Activated CD8-positive, alpha-beta T cell treated with anti-CD3 and anti-CD28 coated beads, Interleukin-2, amount 10 ng/mL, durations not matched to agents 7 days and 5 days (primary cell): ENCODE measurements at regions of chr7 and their contacts with region 1.

Region 1: DNA sequence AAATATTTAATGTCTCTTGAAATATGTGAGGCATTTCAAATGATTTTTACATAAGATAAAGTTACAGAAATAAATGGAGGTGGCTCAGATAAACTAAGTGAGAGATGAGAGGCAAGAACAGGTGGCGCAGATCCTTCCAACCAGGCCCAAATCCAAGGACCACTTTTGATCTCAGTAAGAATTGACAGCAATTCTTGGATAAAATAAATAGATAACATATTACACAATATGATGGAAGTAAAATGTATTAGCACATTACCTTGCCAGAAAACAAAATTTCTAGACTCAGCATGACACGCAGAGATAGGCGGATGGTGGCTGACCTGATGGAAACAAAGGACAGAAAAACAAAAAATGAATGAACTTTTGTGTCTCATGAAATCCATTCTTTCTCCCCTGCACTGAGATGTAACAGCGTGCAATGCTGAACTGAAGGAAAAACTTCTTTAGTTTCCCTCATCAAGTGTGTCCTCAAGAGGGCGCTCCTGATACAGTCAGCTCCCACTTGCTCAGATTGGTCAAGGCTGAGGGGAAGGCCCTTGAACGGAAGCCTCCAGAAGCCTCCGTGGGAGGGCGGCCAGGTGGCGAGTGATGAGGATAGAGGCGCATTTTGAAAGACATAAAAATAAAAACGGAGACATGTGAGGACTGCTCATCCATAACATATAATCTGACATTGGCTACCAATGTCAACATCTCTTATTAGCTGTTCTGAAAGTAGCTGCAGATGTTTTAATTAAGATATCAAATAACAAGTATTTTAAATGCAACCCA is 62.8 kb upstream of the GSDME start:
- DNase-seq: peak; percentile 90
- ATAC-seq: peak; percentile 50
- H3K4me3 Mint-ChIP-seq: peak overlapping the region; percentile 60
- H3K27ac Mint-ChIP-seq: peak overlapping the region; percentile 93
- H3K4me1 Mint-ChIP-seq: peaks cover 42% of the 10 kb centered on the region
- H3K27me3 Mint-ChIP-seq: no peaks in the 10 kb centered on the region

Region 2: GRCh38 chr7:24778543-24779282 is 41.4 kb before region 1 on chr7:
- CTCF ChIA-PET with region 1: no interaction called
- POLR2A ChIA-PET with region 1: no interaction called
- DNase-seq: no peak
- ATAC-seq: no peak
- H3K4me3 Mint-ChIP-seq: no peak overlapping the region
- H3K27ac Mint-ChIP-seq: no peak overlapping the region
- H3K4me1 Mint-ChIP-seq: peaks cover 6% of the 10 kb centered on the region
- H3K27me3 Mint-ChIP-seq: no peaks in the 10 kb centered on the region

Region 3: DNA sequence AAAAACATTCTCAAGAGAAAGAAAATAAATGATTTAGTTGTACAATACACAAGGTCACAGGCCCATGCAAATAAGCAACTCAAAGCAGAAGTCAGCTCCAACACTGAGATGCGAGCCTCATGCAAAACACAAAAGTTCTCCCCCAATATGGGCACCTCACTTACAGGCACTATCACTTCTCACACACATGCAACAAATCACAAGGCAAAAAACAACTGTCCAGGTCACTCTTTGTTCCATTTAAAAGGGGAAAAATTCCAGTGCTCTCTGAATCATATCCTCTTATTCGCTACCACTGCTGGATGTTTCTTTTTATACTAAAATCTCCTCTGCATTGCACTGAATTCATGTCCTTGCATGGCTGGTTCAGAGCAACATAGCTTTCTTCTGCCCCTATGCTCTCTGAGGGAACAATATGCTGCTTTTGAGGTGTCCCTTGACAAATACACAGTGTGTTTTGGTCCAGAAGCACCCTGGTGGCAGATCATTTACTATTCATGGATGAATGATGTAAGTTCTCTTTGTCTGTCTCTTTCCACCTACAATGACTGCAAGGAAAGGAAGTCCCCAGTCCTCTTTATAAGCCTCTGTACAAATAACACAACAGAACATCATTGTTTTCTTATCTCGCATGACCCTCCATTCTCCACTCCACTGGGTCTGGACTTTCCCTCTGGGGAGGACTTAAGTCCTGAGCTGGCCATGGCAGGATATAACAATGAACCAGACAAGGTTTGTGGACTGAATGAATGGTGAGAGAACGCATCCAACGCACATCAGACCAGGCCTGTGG is 22.5 kb after region 1 on chr7:
- CTCF ChIA-PET with region 1: interaction called, 55 read pairs
- POLR2A ChIA-PET with region 1: no interaction called
- DNase-seq: no peak
- ATAC-seq: no peak
- H3K4me3 Mint-ChIP-seq: no peak overlapping the region
- H3K27ac Mint-ChIP-seq: peak overlapping the region; percentile 13
- H3K4me1 Mint-ChIP-seq: peaks cover 9% of the 10 kb centered on the region
- H3K27me3 Mint-ChIP-seq: no peaks in the 10 kb centered on the region

Region 4: DNA sequence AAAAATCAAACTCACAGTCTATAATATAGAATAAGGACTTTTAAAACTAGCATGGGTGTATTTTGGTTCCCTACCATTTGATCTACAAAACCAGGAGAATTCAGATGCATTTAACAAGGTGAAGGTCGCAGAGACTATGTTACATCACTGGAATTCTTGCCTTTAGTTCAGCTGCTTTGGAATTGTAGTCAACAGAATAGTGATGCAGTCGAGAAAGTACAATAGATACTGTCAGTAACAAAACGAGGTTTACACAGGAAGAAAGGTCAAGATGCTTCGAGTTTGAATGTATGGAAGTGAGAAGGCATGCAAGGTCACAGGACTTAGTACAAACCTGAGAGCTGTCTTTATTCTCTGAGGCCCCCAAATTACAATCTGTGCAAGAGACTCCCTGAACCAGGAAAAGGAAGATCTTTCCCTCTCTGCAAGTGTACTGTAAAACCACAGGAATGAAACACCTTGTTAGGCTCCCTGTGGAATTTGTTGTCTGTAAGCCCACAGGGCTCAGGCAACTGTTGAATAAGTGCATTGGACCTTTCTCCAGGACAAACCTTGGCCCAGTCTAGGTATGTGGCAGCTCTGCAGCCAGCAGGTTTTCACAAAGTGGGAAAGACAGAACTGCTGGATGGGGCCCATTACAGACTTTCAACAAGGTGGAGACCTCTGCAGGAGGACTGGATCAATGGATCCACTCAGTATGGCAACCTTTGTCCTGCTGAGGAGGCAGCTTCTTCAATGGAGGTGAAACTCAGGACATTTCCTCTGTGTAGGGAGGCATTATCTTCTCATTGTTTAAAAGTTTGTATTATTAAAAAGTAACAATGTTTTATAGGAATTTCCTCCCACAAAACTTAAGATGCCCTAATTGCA is 38.2 kb after region 1 on chr7:
- CTCF ChIA-PET with region 1: no interaction called
- POLR2A ChIA-PET with region 1: no interaction called
- DNase-seq: no peak
- ATAC-seq: no peak
- H3K4me3 Mint-ChIP-seq: no peak overlapping the region
- H3K27ac Mint-ChIP-seq: no peak overlapping the region
- H3K4me1 Mint-ChIP-seq: peaks cover 11% of the 10 kb centered on the region
- H3K27me3 Mint-ChIP-seq: no peaks in the 10 kb centered on the region

Region 5: GRCh38 chr7:24907311-24907886 is 87.3 kb after region 1 on chr7:
- CTCF ChIA-PET with region 1: interaction called, 22 read pairs
- POLR2A ChIA-PET with region 1: interaction called, 7 read pairs
- DNase-seq: peak; percentile 55
- ATAC-seq: peak; percentile 71
- H3K4me3 Mint-ChIP-seq: no peak overlapping the region
- H3K27ac Mint-ChIP-seq: no peak overlapping the region
- H3K4me1 Mint-ChIP-seq: peaks cover 41% of the 10 kb centered on the region
- H3K27me3 Mint-ChIP-seq: no peaks in the 10 kb centered on the region

Region 6: DNA sequence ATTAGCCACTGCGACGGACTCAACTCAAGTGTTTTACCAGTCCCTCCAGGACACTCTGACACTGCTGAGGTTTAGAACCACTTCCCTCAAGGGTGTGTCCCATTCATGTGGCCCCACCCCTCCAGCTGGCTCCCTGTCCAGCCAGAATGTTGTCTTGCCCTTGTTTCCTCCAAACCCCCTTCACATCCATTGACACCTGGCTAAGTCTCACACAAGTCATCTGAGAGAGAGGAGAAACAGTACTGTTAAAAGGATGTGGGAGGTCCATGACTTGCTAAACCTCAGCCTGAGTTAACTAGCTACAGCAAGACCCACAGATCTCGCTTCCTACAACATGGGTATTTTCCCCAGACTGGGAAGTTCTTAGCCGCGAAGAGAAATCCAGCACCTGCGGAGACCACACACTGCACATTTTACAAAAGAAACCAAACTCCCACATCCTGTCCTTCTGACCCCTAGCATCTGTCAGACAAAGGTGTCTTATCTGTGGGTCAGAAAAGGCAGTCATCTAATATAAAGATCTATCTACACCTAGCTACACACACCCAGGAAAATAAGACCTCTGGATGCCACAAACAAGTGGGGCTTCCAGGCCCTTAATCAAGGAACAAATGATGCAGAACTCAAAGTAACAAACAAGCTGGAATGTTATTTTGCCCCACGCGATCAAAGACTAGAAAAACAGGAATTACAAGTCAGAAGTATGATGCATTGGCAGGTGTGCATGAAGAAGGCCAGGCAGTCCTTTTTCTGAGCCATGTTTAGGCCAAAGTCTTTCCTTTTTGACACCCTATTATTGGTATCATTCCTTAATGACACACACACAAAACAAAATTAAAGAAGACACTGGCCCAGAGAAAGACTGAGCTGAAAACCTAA is 146.0 kb after region 1 on chr7:
- CTCF ChIA-PET with region 1: interaction called, 10 read pairs
- POLR2A ChIA-PET with region 1: interaction called, 3 read pairs
- DNase-seq: peak; percentile 59
- ATAC-seq: peak; percentile 81
- H3K4me3 Mint-ChIP-seq: peak overlapping the region; percentile 19
- H3K27ac Mint-ChIP-seq: peak overlapping the region; percentile 82
- H3K4me1 Mint-ChIP-seq: peaks cover 79% of the 10 kb centered on the region
- H3K27me3 Mint-ChIP-seq: no peaks in the 10 kb centered on the region

Region 7: GRCh38 chr7:25069900-25070443 is 249.9 kb after region 1 on chr7:
- CTCF ChIA-PET with region 1: interaction called, 35 read pairs
- POLR2A ChIA-PET with region 1: no interaction called
- DNase-seq: peak; percentile 71
- ATAC-seq: peak; percentile 76
- H3K4me3 Mint-ChIP-seq: no peak overlapping the region
- H3K27ac Mint-ChIP-seq: no peak overlapping the region
- H3K4me1 Mint-ChIP-seq: peaks cover 11% of the 10 kb centered on the region
- H3K27me3 Mint-ChIP-seq: peaks cover 9% of the 10 kb centered on the region